ENCODE measurements at regions of chr2 and their contacts with region 1.

Region 1: DNA sequence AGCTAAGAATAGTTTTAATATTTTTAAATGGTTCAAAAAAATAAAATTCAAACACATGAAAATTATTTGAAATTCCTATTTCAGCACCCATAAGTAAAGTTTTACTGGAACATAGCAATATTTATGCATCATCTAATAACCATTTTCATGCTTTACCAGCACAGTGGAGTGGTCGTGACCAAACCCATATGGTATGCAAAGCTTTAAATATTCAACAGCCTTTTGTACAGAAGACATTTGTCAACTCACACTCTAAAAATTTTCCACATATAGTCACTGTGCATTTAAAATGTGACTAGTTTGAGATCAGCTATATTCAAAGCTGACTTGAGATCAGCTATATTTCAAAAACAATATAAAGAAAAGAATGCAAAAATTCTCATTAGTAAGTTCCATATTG is 46.2 kb downstream of the PUM2 start:
- DNase-seq: no peak
- ATAC-seq: no peak
- H3K4me3 ChIP-seq: no peak overlapping the region
- H3K27ac ChIP-seq: no peak overlapping the region
- H3K4me1 ChIP-seq: no peaks in the 10 kb centered on the region
- H3K27me3 ChIP-seq: no peaks in the 10 kb centered on the region
- CTCF ChIP-seq: no peak

Region 2: GRCh38 chr2:20254731-20255130 is 49.7 kb before region 1 on chr2:
- intact Hi-C with region 1: loop called in 1 of 2 experiments (anchors 10 kb)
- DNase-seq: no peak
- ATAC-seq: no peak
- H3K4me3 ChIP-seq: no peak overlapping the region
- H3K27ac ChIP-seq: no peak overlapping the region
- H3K4me1 ChIP-seq: no peaks in the 10 kb centered on the region
- H3K27me3 ChIP-seq: no peaks in the 10 kb centered on the region
- CTCF ChIP-seq: no peak

Measured in psoas muscle (tissue), 8 donors.